ENCODE measurements at regions of chr16 and their contacts with region 1.

Region 1: DNA sequence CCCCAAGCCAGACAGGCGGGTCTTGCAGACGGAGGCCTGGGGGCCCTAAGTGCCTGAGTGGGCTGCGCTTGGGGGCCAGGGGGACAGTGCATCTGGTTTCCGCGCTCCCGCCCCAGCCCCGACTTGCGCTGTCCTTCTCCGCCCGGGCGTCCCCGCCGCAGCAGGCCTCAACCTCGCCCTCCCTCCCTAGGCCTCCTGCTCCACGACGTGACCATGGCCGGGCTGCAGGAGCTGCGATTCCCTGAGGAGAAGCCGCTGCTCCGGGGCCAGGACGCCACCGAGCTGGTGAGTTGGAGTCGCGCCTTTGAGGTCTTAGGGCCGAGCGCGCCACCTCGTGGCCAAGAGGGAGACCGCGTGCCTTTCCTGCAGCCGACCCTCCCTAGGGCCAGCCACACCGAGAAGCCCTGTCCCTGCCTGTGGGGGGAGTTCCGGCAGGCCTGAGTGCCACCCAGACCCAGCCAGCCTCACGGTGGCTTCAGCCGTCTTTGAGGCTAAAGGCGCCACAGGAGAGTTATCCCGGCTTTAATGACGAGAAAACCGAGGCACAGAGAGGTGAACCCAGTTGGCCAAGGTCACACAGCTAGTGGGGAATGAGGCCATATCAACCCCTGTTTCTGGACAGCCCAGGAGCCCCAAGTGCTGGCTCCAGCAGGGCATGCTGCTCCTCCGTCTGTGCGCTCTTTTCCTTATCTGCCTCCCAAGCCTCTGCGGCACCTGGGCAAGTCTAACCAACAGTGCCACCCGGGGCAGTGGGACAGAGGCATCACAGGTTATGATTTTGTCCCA is 12.2 kb upstream of the NDRG4 start:
- DNase-seq: peak; percentile 90 to 92
- H3K4me3 ChIP-seq: no peak overlapping the region
- H3K4me3 Mint-ChIP-seq: no peak overlapping the region
- H3K27ac Mint-ChIP-seq: no peak overlapping the region
- H3K4me1 ChIP-seq: no peaks in the 10 kb centered on the region
- H3K4me1 Mint-ChIP-seq: no peaks in the 10 kb centered on the region
- H3K27me3 ChIP-seq: no peaks in the 10 kb centered on the region
- H3K27me3 Mint-ChIP-seq: peaks cover 4% of the 10 kb centered on the region
- CTCF ChIP-seq: peak; percentile 98 to 99

Region 2: DNA sequence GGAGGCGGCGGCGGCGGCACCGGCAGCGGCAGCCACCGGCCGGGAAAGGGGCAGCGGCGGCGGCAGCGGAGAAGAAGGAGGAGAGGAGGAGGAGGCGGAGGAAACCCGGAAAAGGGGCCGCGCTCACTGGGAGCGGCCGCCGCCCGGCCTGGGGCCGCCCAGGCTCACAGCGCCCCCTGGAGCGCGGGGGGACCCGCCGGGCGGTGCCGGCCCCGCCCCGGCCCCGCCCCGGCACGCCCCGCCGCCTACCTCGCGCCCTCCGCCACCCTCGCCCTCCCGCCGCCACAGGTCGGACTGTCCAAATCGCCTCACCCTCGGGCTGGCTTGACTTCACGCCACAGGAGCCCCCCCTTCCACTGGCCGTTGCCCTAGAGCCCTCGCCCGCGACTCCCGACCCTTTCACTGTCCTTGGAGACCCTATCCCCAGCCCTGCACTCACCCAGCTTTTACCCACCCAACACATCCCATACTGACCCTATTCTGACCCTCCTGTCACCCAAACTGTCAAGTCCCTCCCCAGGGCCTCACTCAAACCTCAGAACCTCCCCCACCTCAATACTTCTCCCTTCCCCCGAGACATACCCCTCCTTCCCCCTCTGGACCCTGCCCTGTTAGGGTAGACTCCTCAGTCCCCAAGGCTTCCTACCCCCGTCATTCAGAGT is 289.6 kb before region 1 on chr16 and contains the start of gene CSNK2A2:
- CTCF ChIA-PET with region 1: no interaction called
- POLR2A ChIA-PET with region 1: no interaction called
- intact Hi-C with region 1: loop called (anchors 5 kb)
- DNase-seq: peak; percentile 75 to 86
- H3K4me3 ChIP-seq: peak within 1 kb of the TSS; percentile 95
- H3K4me3 Mint-ChIP-seq: peak within 1 kb of the TSS; percentile 96
- H3K27ac Mint-ChIP-seq: peak within 1 kb of the TSS; percentile 84
- H3K4me1 ChIP-seq: peaks cover 11% of the 10 kb centered on the region
- H3K4me1 Mint-ChIP-seq: peaks cover 12% of the 10 kb centered on the region
- H3K27me3 ChIP-seq: no peaks in the 10 kb centered on the region
- H3K27me3 Mint-ChIP-seq: peaks cover 8% of the 10 kb centered on the region
- CTCF ChIP-seq: peak; percentile 20 to 49
- total RNA-seq, gene CSNK2A2: 165 and 181 TPM in 2 replicates

Region 3: DNA sequence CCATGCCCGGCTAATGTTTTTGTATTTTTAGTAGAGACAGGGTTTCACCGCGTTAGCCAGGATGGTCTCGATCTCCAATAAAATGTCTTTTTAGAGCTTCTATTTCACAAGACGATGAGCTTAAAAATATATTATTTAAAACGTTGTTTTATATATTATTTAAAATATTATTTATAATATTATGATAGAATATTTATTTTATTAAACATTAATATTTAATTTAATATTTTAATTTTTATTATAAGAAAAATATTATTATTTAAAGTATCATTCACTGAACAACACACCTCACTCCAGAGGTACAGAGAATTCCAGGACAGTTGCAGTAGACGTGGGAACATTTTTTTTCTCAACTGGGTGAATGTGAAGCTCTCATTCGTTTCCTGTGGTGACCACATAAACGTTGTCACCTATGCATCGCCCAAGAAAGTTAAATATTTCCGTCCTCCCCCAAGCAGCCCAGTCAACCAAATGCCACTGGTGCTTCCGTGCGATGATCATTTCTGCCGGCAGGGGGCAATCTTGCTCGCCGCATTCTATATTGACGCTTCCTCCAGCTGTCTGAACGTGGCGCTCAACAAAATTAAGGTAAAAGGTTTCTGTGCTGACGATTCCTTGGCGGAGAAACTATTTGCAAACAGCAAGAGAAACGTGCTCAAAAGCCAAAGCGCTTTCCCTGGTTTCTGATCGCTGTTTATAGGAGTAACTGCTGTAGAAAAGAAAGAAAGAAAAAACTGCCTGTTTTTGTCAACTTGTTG is 151.2 kb before region 1 on chr16:
- CTCF ChIA-PET with region 1: interaction called, 86 read pairs
- POLR2A ChIA-PET with region 1: interaction called, 3 read pairs
- intact Hi-C with region 1: loop called (anchors 1 kb)
- DNase-seq: peak; percentile 89 to 92
- H3K4me3 ChIP-seq: no peak overlapping the region
- H3K4me3 Mint-ChIP-seq: peak overlapping the region; percentile 48
- H3K27ac Mint-ChIP-seq: no peak overlapping the region
- H3K4me1 ChIP-seq: no peaks in the 10 kb centered on the region
- H3K4me1 Mint-ChIP-seq: no peaks in the 10 kb centered on the region
- H3K27me3 ChIP-seq: no peaks in the 10 kb centered on the region
- H3K27me3 Mint-ChIP-seq: no peaks in the 10 kb centered on the region
- CTCF ChIP-seq: peak; percentile 93 to 95

Region 4: GRCh38 chr16:58366247-58367031 is 121.3 kb before region 1 on chr16:
- CTCF ChIA-PET with region 1: no interaction called
- POLR2A ChIA-PET with region 1: no interaction called
- intact Hi-C with region 1: no loop called
- DNase-seq: no peak
- H3K4me3 ChIP-seq: no peak overlapping the region
- H3K4me3 Mint-ChIP-seq: no peak overlapping the region
- H3K27ac Mint-ChIP-seq: no peak overlapping the region
- H3K4me1 ChIP-seq: no peaks in the 10 kb centered on the region
- H3K4me1 Mint-ChIP-seq: no peaks in the 10 kb centered on the region
- H3K27me3 ChIP-seq: no peaks in the 10 kb centered on the region
- H3K27me3 Mint-ChIP-seq: peaks cover 7% of the 10 kb centered on the region
- CTCF ChIP-seq: no peak

Region 5: DNA sequence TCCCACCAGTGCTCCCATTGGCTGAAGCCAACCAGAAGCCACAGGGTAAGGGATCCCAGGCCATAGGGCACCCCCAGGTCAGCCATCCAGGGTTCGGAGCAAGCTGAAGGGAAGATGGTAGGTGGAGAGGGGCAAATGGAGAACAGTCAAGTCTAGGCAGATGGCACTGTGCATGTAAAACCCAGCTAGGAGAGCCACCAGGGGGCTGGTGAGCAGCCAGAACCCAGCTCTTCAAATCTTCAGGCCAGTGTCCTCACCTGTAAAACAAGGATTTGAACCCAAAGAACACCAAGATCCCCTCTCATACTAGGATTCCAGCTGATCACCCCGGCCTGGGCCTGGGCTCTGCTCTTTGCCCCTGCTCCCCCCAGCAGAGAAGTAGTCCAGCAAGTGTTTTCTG is 52.0 kb before region 1 on chr16:
- CTCF ChIA-PET with region 1: interaction called, 11 read pairs
- POLR2A ChIA-PET with region 1: no interaction called
- intact Hi-C with region 1: no loop called
- DNase-seq: no peak
- H3K4me3 ChIP-seq: no peak overlapping the region
- H3K4me3 Mint-ChIP-seq: no peak overlapping the region
- H3K27ac Mint-ChIP-seq: no peak overlapping the region
- H3K4me1 ChIP-seq: no peaks in the 10 kb centered on the region
- H3K4me1 Mint-ChIP-seq: no peaks in the 10 kb centered on the region
- H3K27me3 ChIP-seq: no peaks in the 10 kb centered on the region
- H3K27me3 Mint-ChIP-seq: no peaks in the 10 kb centered on the region
- CTCF ChIP-seq: peak; percentile 25 to 34

Region 6: DNA sequence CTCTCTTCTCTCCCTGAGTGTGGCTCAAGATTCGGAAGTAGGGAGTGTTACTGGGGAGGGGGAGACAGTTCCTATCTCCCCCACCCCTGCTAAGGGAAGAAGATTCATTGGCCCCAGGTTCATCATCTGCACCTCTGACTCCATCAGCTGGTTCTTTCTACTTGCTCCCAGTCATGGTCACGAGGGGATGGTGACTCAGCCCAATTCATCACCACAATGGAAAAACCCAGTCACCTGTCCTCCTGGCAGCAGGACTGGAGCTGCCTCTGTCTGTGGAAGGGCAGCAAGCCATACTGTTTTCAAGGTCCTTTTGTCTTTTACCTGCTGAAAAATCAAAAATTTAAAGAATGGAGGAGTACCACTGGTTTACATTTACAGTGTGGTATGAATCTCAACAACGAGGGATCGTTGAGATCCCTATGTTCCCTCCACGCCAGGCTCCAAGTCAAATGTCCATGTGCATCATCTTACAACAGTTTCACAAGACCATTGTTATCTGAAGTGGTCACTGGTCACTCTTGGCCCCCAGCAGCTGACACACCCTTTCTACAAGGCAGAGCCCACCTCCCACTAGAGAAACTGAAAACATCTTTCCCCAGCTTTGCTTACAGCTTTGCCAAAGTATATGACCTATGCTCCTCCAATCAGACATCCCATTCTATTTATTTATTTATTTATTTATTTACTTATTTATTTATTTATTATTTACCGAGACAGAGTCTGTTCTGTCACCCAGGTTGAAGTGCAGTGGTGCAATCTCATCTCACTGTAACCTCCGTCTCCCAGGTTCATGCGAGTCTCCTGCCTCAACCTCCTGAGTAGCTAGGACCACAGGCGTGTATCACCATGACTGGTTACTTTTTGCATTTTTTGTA is 28.2 kb before region 1 on chr16:
- CTCF ChIA-PET with region 1: interaction called, 11 read pairs
- POLR2A ChIA-PET with region 1: no interaction called
- intact Hi-C with region 1: loop called (anchors 1 kb)
- DNase-seq: no peak
- H3K4me3 ChIP-seq: no peak overlapping the region
- H3K4me3 Mint-ChIP-seq: no peak overlapping the region
- H3K27ac Mint-ChIP-seq: no peak overlapping the region
- H3K4me1 ChIP-seq: peaks cover 29% of the 10 kb centered on the region
- H3K4me1 Mint-ChIP-seq: peaks cover 9% of the 10 kb centered on the region
- H3K27me3 ChIP-seq: no peaks in the 10 kb centered on the region; the same call in 1 of the 2 replicates
- H3K27me3 Mint-ChIP-seq: peaks cover 4% of the 10 kb centered on the region
- CTCF ChIP-seq: no peak

Measured in Caco-2 (cell line).